B cell (primary cell): ENCODE measurements at regions of chr9 and their contacts with region 1.

Region 1: GRCh38 chr9:128455849-128456612 is at the start of gene ODF2:
- DNase-seq: peak; percentile 98
- ATAC-seq: peak; percentile 85
- H3K4me3 ChIP-seq: peak within 1 kb of the TSS; percentile 23 to 89 (median 81)
- H3K4me3 Mint-ChIP-seq: peak within 1 kb of the TSS; percentile 93
- H3K27ac ChIP-seq: peak within 1 kb of the TSS; percentile 65 to 92
- H3K27ac Mint-ChIP-seq: peak within 1 kb of the TSS; percentile 93
- H3K4me1 ChIP-seq: peaks cover 8 to 13% of the 10 kb centered on the region in 2 donors
- H3K4me1 Mint-ChIP-seq: peaks cover 18% of the 10 kb centered on the region
- H3K27me3 ChIP-seq: no peaks in the 10 kb centered on the region
- H3K27me3 Mint-ChIP-seq: no peaks in the 10 kb centered on the region
- CTCF ChIP-seq: no peak
- total RNA-seq, gene ODF2: 36.6 and 42.9 TPM in 2 replicates

Region 2: DNA sequence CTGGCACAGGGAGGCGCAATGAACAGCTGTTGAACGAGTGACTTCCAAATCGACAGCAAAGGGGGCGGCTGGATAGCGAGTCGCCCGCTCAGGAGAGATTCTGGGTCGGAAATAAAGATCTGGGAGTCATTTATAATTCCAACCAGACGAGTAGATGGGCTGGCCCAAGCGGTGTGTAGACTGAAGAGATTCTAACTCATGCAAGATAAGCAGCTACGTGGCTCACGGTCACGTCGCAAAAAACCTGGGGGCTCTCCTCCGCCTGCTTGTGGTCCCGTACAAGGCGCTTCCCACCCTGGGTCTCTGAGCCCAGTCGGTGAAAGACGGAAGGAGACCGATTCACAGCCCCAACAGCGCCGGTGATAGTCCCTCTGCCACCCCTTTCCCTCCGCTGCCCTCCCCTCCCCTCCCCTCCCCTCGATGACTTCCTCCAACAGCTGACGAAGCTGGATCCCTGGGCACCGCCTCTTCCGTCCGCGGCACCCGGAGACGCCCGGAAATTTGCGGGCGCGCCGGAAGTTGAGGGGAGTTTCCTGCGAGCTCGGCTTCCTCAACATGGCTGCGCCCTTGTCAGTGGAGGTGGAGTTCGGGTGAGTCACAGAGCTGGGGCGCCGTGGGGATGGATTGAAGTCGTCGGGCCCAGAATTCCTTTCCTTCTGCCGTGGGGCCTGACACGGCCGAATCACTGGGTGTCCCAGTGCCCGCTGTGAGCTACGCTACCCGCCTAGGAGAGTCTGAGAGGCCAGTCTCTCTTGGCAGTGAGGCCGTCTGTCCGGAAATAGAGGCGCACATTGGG is 85.0 kb before region 1 on chr9 and contains the start of gene URM1:
- CTCF ChIA-PET with region 1: no interaction called
- POLR2A ChIA-PET with region 1: interaction called, 8 read pairs
- intact Hi-C with region 1: loop called (anchors 1 kb)
- DNase-seq: peak; percentile 96
- ATAC-seq: peak; percentile 94
- H3K4me3 ChIP-seq: peak within 1 kb of the TSS; percentile 86 to 98 (median 90)
- H3K4me3 Mint-ChIP-seq: peak within 1 kb of the TSS; percentile 95
- H3K27ac ChIP-seq: peak within 1 kb of the TSS; percentile 83 to 96
- H3K27ac Mint-ChIP-seq: peak within 1 kb of the TSS; percentile 96
- H3K4me1 ChIP-seq: peaks cover 15 to 23% of the 10 kb centered on the region in 2 donors
- H3K4me1 Mint-ChIP-seq: peaks cover 30% of the 10 kb centered on the region
- H3K27me3 ChIP-seq: no peaks in the 10 kb centered on the region
- H3K27me3 Mint-ChIP-seq: no peaks in the 10 kb centered on the region
- CTCF ChIP-seq: no peak
- total RNA-seq, gene URM1: 35.6 and 43.8 TPM in 2 replicates

Region 3: DNA sequence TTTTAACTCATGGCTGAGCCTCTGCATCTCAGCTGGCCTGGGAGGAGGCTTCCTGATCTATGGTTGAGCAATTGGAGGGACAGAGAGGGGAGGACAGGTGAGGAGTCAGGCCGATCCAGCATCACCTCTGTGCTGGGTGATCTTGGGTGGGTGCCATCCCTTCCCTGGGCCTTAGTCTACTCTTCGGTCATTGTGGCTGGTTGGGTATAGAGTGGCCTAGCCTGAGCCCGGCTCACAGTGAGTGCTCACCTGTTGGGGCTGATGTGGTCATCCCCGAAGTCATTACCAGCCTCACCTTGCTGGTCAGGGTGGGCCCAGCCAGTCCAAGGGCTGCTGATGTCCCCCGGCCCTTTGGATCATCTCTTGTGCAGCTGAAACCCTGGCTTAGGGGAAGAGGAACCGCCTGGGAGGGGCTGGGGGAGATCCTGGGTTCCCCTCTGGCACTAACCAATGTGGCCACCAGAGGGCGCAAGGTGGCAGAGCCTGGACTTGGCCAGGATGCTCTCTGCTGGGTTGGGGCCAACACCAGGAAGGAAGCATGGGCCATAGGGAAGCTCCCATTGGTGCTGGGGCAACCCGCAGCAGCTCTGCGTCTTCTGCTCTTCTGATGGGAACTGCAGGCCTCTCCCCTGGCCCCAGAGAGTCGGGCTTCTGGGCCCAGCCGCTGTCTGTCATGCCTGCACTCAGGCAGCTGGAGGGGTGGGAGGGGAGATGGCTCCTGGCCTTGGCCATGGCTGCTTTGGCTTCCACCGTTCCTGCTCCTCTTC is 17.5 kb before region 1 on chr9:
- CTCF ChIA-PET with region 1: interaction called, 6 read pairs
- POLR2A ChIA-PET with region 1: interaction called, 8 read pairs
- intact Hi-C with region 1: loop called (anchors 1 kb)
- DNase-seq: peak; percentile 84
- ATAC-seq: peak; percentile 94
- H3K4me3 ChIP-seq: no peak overlapping the region
- H3K4me3 Mint-ChIP-seq: no peak overlapping the region
- H3K27ac ChIP-seq: no peak overlapping the region
- H3K27ac Mint-ChIP-seq: no peak overlapping the region
- H3K4me1 ChIP-seq: peaks cover 3 to 8% of the 10 kb centered on the region in 2 donors
- H3K4me1 Mint-ChIP-seq: peaks cover 7% of the 10 kb centered on the region
- H3K27me3 ChIP-seq: no peaks in the 10 kb centered on the region
- H3K27me3 Mint-ChIP-seq: no peaks in the 10 kb centered on the region
- CTCF ChIP-seq: peak; percentile 90

Region 4: DNA sequence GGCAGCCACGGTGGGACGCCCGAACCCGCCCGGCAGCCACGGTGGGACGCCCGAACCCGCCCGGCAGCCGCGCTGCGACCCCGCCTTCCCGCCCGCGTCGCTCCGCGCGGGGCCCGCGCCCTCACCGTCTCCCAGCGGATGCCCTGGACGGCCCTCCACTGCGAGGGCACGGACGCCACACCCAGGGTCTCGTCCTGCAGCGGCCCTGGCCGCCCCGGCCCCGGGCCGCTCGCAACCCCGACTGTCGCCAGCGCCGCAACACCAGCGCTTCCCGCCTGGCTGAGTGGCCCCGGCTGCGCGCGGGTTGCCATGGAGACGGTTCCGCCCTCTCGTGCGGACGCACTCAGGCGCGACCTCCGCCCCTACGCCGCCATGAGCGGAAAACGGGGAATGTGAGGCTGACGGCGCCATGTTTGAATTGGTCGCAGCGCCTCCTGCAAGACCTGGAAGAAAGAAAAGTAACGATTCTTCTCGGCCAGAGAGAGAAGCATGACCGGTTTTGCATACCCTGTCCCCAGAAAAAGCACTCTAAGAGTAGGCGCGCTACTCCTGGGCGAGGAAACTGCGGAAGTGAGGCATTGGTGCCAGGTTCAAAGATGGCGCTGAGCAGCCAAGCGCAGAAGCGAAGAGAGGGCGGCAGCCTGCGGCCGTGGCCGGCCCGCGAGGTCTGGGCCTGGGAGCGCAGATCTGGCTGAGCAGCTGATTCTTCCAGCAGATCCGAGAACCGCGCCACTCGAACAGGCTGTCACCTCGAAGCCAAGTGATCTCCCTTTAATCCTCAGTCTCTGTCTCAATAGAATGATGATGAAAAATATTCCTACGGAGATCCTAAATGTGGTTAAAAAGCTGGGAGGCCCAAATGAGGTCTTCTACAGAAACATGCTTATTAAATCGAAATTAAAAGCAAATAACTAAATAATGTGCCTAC is 200.6 kb after region 1 on chr9 and contains the start of gene DYNC2I2:
- CTCF ChIA-PET with region 1: no interaction called
- POLR2A ChIA-PET with region 1: no interaction called
- intact Hi-C with region 1: loop called (anchors 1 kb)
- DNase-seq: peak; percentile 90
- ATAC-seq: peak; percentile 80
- H3K4me3 ChIP-seq: peak within 1 kb of the TSS; percentile 66 to 97 (median 89)
- H3K4me3 Mint-ChIP-seq: peak within 1 kb of the TSS; percentile 96
- H3K27ac ChIP-seq: peak within 1 kb of the TSS; percentile 92 to 95
- H3K27ac Mint-ChIP-seq: peak within 1 kb of the TSS; percentile 100
- H3K4me1 ChIP-seq: peaks cover 2 to 14% of the 10 kb centered on the region in 2 donors
- H3K4me1 Mint-ChIP-seq: peaks cover 13% of the 10 kb centered on the region
- H3K27me3 ChIP-seq: no peaks in the 10 kb centered on the region
- H3K27me3 Mint-ChIP-seq: no peaks in the 10 kb centered on the region
- CTCF ChIP-seq: no peak
- total RNA-seq, gene DYNC2I2: 76.6 and 83.4 TPM in 2 replicates

Region 5: DNA sequence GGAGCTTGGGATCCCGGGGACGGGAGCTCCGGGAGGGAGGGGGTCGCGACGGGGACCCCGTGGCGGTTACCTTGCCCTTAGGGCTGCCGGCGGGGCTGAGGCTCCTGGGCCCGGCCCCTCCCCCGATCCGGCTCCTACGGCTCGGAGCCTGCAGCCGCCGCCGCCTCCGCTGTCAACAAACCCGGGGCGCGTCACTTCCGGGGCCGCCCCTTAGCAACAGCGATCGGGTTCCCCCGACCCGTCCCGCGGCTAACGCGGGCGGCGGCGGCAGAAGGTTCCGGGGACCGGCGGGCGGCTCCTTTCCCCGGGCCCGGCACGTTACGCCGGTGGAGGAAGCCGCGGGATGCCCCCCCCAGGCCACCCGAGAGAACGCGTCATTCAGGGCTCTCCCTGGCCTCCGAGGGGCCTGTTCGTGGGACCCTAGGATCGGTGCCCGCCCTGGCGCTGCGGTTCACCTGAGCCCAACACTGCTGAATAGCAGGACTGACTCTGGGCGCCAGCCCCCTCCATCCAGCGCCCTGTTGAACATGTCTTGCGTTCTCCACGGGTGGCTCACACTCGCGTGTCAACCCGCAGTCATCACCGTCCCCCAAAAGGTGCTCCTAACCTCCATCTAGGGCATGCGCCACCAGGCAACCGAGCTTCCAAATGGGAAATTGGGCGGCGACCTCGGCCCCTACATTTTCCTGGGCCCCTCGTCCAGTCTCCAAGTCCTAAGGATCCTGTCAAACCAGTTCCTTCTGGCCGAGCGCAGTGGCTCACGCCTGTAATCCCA is 315.9 kb after region 1 on chr9 and contains the start of gene ZER1:
- CTCF ChIA-PET with region 1: interaction called, 3 read pairs
- POLR2A ChIA-PET with region 1: no interaction called
- intact Hi-C with region 1: loop called (anchors 1 kb)
- DNase-seq: peak; percentile 95
- ATAC-seq: peak; percentile 93
- H3K4me3 ChIP-seq: peak within 1 kb of the TSS; percentile 69 to 96 (median 77)
- H3K4me3 Mint-ChIP-seq: peak within 1 kb of the TSS; percentile 97
- H3K27ac ChIP-seq: peak within 1 kb of the TSS; percentile 86 to 93
- H3K27ac Mint-ChIP-seq: peak within 1 kb of the TSS; percentile 96
- H3K4me1 ChIP-seq: peaks cover 9 to 19% of the 10 kb centered on the region in 2 donors
- H3K4me1 Mint-ChIP-seq: peaks cover 25% of the 10 kb centered on the region
- H3K27me3 ChIP-seq: no peaks in the 10 kb centered on the region
- H3K27me3 Mint-ChIP-seq: no peaks in the 10 kb centered on the region
- CTCF ChIP-seq: no peak
- total RNA-seq, gene ZER1: 42.2 and 44.0 TPM in 2 replicates